ENCODE measurements at regions of chr2 and their contacts with region 1.

Region 1: GRCh38 chr2:41907771-41908207 is 140.0 kb upstream of the PKDCC start:
- DNase-seq: no peak
- ATAC-seq: peak in 1 of 2 experiments; percentile 58; a peak in 3 of 6 replicates
- H3K4me3 ChIP-seq: no peak overlapping the region
- H3K27ac ChIP-seq: peak overlapping the region in 1 of 2 experiments; percentile 12; a peak in 1 of 6 replicates
- H3K4me1 ChIP-seq: peaks cover 11% of the 10 kb centered on the region
- CTCF ChIP-seq: no peak
- EP300 ChIP-seq: no peak
- POLR2A ChIP-seq: no peak
- RAD21 ChIP-seq: no peak

Region 2: GRCh38 chr2:41886757-41887156 is 21.0 kb before region 1 on chr2:
- CTCF ChIA-PET with region 1: interaction called, 11 read pairs
- POLR2A ChIA-PET with region 1: no interaction called
- DNase-seq: no peak
- ATAC-seq: no peak
- H3K4me3 ChIP-seq: no peak overlapping the region
- H3K27ac ChIP-seq: 0 out of 6 replicates have a peak overlapping the region, but pooled peaks of 1 of the 2 experiments have one; percentile 6
- H3K4me1 ChIP-seq: 0 out of 3 replicates have a peak, but pooled peaks cover 4% of the 10 kb centered on the region
- CTCF ChIP-seq: no peak
- EP300 ChIP-seq: no peak
- POLR2A ChIP-seq: no peak
- RAD21 ChIP-seq: no peak

Region 3: DNA sequence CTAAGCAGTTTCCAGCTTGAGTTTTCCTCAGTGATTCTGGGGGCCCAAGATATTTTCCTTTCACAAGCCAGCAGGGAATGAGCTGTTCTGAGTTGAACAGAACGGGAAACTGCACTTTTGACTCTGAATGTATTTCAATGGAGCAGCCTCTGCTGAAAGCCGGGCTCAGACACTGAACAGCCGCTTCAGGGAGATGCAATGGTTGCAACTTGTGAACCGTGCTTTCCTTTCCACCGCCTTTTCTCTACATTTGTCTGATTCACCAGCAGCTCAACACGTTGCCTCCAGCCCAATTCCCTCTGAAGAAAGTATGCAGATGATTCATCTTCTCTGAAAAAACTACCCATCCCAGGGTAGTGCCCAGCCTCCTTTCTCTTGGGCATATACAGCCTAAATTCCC is 20.7 kb after region 1 on chr2:
- CTCF ChIA-PET with region 1: interaction called, 16 read pairs
- POLR2A ChIA-PET with region 1: no interaction called
- DNase-seq: peak; percentile 66 to 72
- ATAC-seq: peak; percentile 76 to 77
- H3K4me3 ChIP-seq: no peak overlapping the region
- H3K27ac ChIP-seq: peak overlapping the region; percentile 74 to 91
- H3K4me1 ChIP-seq: peaks cover 65% of the 10 kb centered on the region
- CTCF ChIP-seq: no peak
- EP300 ChIP-seq: no peak
- POLR2A ChIP-seq: no peak
- RAD21 ChIP-seq: no peak

Measured in A549 (cell line).